PC-9 (cell line): ENCODE measurements at regions of chr17 and their contacts with region 1.

Region 1: GRCh38 chr17:51536627-51537026 is 276.3 kb downstream of the UTP18 start:
- DNase-seq: no peak
- H3K4me3 ChIP-seq: no peak overlapping the region
- H3K27ac ChIP-seq: no peak overlapping the region
- H3K4me1 ChIP-seq: no peaks in the 10 kb centered on the region
- H3K27me3 ChIP-seq: peaks cover 13% of the 10 kb centered on the region; the same call in 1 of the 2 replicates
- CTCF ChIP-seq: no peak

Region 2: GRCh38 chr17:51298508-51299371 is 237.9 kb before region 1 on chr17:
- CTCF ChIA-PET with region 1: interaction called, 3 read pairs
- POLR2A ChIA-PET with region 1: no interaction called
- intact Hi-C with region 1: loop called (anchors 1 kb)
- DNase-seq: no peak
- H3K4me3 ChIP-seq: no peak overlapping the region
- H3K27ac ChIP-seq: no peak overlapping the region
- H3K4me1 ChIP-seq: no peaks in the 10 kb centered on the region
- H3K27me3 ChIP-seq: no peaks in the 10 kb centered on the region
- CTCF ChIP-seq: peak; percentile 80

Region 3: DNA sequence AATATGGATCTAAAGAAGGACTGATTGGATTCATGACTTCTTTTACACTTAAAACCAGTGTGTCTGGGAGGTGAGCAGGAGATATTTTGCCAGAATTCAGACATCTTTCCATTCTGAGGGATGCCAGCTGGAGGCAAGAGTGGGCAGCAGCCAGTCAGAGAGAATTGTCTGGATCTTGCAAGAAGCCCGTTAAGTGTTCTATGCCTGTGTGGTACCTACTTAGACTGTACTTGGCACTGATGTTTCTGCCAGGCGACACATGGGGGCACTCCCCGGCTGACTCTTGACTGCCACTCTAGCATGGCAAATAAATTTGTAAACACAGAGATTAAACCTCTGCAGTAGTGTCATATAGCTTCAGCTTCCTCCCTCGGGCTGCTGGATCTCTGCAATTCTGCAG is 28.6 kb before region 1 on chr17:
- CTCF ChIA-PET with region 1: no interaction called
- POLR2A ChIA-PET with region 1: no interaction called
- intact Hi-C with region 1: no loop called
- DNase-seq: no peak
- H3K4me3 ChIP-seq: no peak overlapping the region
- H3K27ac ChIP-seq: no peak overlapping the region
- H3K4me1 ChIP-seq: no peaks in the 10 kb centered on the region
- H3K27me3 ChIP-seq: peaks cover 34% of the 10 kb centered on the region
- CTCF ChIP-seq: no peak